Calu3 (cell line): ENCODE measurements at regions of chr2 and their contacts with region 1.

Region 1: DNA sequence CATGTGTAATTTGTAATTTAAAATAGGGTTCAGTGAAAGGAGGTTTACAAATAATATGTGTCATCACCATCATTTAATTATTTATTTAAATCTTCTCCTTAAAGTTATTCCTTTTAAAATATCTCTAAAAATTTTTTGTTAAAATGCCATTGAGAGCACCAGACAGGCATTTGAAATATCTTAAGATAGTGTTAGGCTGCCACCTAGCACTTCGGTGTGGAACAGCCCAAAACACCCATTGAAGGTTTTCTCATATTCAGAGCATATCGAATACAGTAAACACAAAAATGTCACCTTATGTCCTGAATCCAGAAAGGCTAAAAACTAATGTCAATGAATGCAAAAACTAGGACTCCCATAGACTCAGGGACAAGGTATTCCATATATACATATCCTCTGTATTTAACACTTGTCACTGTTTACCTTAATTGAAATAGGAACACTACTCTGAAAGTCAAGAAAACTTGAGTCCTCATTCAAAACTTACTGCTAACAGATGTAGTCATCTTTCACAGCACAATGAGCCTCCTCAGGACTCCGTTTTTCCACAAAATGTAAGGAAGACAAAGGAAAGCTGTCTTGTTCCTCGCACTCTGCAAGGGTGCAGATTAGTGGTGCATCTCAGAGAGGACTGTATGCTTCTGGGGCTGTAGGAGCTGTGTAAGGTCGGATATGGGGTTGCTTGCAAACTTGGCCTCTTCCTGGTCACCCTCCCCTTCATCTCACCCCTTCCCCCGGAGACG is 329.5 kb downstream of the PAX3 start:
- DNase-seq: peak; percentile 38
- H3K4me3 Mint-ChIP-seq: no peak overlapping the region
- H3K27ac Mint-ChIP-seq: no peak overlapping the region
- H3K4me1 Mint-ChIP-seq: no peaks in the 10 kb centered on the region
- H3K27me3 Mint-ChIP-seq: peaks cover 9% of the 10 kb centered on the region
- CTCF ChIP-seq: peak; percentile 65

Region 2: DNA sequence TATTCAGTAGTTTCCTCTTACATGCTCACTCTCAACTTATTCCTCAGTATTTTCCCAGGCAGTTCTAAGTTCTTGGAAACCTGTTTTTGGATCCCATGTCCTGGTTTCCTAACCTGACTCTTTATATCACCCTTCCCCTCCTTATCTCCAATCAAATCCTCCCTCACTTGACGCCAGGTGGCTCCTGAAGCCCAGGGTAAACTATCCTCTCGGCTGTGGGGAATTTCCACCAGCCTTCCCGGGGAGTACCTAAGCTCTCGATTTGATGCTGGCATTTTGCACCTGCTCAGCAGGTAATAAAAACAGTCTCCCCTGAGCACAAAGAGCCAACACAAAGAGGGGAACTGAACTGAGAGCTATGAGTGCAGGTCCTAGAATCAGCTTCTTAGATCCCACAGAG is 1803.9 kb before region 1 on chr2:
- CTCF ChIA-PET with region 1: no interaction called
- intact Hi-C with region 1: loop called (anchors 2 kb)
- DNase-seq: peak; percentile 58
- H3K4me3 Mint-ChIP-seq: no peak overlapping the region
- H3K27ac Mint-ChIP-seq: no peak overlapping the region
- H3K4me1 Mint-ChIP-seq: peaks cover 8% of the 10 kb centered on the region
- H3K27me3 Mint-ChIP-seq: no peaks in the 10 kb centered on the region
- CTCF ChIP-seq: peak; percentile 36

Region 3: DNA sequence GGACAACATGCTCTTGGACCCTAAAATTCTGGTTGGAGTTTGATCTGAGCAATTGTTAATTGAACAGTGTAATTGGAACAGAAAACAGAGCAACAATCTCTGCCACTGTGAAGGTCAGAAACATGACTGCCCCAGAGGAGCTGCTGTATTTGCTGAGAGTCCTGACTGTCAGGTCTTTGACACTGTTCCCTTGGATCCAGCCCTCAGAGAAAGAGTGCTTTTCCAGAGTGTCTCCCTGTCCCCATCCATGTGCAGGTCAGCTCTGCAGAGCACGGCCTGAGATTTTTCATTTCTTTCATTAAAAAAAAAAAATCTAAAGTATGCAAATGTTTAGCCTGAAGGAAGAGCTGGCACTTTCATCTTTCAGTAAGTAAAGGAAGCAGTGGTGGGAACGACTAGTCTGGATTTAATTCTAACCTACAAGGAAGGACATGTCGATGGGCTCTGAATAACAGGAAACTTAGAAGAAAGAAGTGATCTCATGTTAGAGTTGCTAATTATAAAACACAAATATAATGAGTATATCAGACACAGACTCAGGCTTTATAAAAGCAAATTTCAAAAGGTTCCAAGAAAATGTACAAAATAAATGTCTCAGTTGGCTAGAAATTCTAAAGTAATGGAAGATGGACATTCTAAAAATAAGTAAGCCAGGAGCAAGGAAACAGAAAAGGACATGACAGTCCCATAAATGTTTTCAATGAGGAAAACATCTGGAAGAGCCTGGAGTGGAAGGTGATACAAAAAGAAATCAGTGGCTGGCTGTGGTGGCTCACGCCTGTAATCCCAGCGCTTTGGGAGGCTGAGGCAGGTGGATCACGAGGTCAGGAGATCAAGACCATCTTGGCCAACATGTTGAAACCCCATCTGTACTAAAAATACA is 1273.6 kb before region 1 on chr2:
- CTCF ChIA-PET with region 1: no interaction called
- intact Hi-C with region 1: loop called (anchors 10 kb)
- DNase-seq: no peak
- H3K4me3 Mint-ChIP-seq: no peak overlapping the region
- H3K27ac Mint-ChIP-seq: no peak overlapping the region
- H3K4me1 Mint-ChIP-seq: peaks cover 8% of the 10 kb centered on the region
- H3K27me3 Mint-ChIP-seq: no peaks in the 10 kb centered on the region
- CTCF ChIP-seq: no peak

Region 4: DNA sequence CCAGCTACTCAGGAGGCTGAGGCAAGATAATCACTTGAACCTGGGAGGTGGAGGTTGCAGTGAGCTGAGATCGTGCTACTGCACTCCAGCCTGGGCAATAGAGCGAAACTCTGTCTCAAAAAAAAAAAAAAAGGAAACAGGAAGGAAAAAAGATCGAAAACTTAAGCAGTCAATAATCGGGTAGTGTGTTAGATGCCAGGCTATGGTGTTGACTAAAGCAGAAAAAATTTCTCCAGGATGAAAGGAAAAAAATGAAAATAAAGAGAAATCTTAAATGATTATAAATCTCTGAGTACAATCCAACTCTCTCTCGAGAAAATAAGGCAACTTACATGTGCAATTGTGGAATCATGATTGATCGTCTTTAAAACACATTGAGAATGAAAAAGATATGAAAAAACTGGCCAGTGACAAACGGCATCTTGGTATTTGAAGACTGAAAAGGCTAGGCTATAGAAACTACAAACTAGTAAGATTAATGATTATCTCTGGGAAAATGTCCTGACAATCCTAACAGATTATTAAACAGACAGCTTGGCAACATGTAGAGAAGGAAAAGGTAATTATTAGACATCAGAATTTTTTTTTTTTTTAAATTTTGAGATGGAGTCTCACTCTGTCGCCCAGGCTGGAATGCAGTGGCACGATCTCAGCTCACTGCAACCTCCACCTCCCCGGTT is 380.8 kb before region 1 on chr2:
- CTCF ChIA-PET with region 1: no interaction called
- intact Hi-C with region 1: loop called (anchors 5 kb)
- DNase-seq: no peak
- H3K4me3 Mint-ChIP-seq: peak overlapping the region; percentile 50
- H3K27ac Mint-ChIP-seq: peak overlapping the region; percentile 37
- H3K4me1 Mint-ChIP-seq: peaks cover 12% of the 10 kb centered on the region
- H3K27me3 Mint-ChIP-seq: no peaks in the 10 kb centered on the region
- CTCF ChIP-seq: no peak

Region 5: GRCh38 chr2:221635949-221636348 is 333.3 kb before region 1 on chr2:
- CTCF ChIA-PET with region 1: no interaction called
- intact Hi-C with region 1: loop called (anchors 5 kb)
- DNase-seq: peak; percentile 37
- H3K4me3 Mint-ChIP-seq: no peak overlapping the region
- H3K27ac Mint-ChIP-seq: no peak overlapping the region
- H3K4me1 Mint-ChIP-seq: no peaks in the 10 kb centered on the region
- H3K27me3 Mint-ChIP-seq: no peaks in the 10 kb centered on the region
- CTCF ChIP-seq: peak; percentile 14